Endothelial cell of umbilical vein (primary cell): ENCODE measurements at regions of chr4 and their contacts with region 1.

Region 1: DNA sequence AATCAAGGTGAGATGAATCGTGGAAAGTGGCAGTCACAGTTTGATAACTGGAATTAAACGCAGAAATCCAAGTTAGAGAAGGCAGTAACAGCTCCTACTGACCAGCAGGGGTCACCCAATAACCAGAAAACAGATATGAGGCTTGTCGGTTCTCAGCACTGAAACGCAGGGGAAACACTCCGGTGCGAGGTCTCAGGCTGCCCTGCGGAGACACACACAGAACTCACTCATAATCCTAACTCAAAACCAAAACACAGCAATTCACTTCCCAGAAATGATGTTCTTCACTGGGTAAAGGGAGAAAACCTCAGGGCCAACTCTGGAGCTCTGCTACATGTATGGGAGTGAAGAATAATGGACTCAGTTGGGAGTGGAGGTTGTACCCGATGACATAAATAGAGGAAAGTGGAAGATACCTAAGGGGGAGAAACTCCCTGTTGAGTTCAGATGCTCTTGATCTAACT is 384.4 kb downstream of the RAPGEF2 start:
- DNase-seq: peak; percentile 65
- H3K4me3 ChIP-seq: no peak overlapping the region
- H3K27ac ChIP-seq: no peak overlapping the region
- H3K4me1 ChIP-seq: no peaks in the 10 kb centered on the region
- H3K27me3 ChIP-seq: peaks cover 18 to 29% of the 10 kb centered on the region in 2 experiments
- CTCF ChIP-seq: peak; percentile 68 to 70
- POLR2A ChIP-seq: no peak

Region 2: DNA sequence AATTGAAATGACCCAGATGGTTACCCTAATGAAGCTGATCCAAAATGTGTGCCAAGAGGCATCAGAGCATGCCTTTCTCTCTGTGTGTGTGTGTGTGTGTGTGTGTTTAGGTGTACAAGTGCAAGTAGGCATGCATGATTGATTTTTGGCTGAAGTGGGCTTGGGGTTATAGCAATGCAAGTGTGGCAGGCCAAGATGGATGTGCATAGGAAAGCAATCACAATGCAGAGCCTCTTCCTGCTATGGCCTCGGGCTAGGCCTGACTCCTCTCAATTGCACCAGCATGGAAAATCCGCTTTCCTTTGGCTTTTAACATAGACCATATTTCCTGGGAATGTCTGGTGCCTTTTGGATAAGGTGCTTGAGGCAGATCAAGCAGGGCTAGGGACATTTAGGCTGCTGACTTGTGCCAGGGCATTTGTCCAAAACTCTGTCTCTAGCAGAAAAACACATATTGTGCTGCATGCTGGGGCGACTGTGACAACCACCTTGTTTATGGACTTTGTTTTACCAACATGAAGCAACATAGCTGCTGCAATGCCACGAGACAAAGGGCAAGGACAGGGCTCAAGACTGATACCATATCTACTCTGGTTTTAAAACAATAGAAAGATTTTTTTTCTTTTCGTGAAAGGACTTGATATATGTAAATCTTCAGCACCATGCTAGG is 11.3 kb after region 1 on chr4:
- CTCF ChIA-PET with region 1: interaction called, 26 read pairs
- POLR2A ChIA-PET with region 1: no interaction called
- dilution Hi-C with region 1: no loop called
- intact Hi-C with region 1: no loop called
- DNase-seq: no peak
- H3K4me3 ChIP-seq: no peak overlapping the region
- H3K27ac ChIP-seq: no peak overlapping the region
- H3K4me1 ChIP-seq: peaks cover 4% of the 10 kb centered on the region
- H3K27me3 ChIP-seq: peaks cover 14 to 29% of the 10 kb centered on the region in 2 experiments
- CTCF ChIP-seq: no peak
- POLR2A ChIP-seq: no peak

Region 3: DNA sequence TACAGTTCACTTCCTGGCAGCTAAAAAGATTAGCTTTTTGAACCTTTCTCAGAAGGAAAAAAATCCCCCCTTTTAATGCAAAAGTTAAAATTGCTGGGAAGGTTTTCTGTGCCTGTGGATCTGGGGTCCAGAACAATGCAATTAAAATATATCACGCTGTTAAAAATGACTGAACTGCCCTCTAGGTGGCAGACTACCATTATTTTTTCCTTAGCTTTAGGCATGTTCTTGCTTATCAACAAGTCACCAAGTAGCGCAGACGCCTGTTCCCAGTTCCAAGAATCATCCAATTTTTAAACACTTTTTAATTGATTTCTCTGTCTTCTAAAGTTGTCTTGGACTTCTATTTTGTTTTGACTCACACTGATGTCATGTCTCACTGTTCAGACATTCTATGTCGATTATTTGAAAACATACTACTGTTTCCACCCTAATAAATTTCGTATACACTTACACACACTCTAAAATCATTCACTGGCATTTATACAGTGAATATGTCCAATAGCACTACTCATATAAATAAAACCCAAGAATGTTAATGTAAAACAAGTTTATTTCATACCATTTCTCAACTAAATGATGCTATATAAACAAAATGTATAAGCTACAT is 277.1 kb after region 1 on chr4:
- CTCF ChIA-PET with region 1: interaction called, 14 read pairs
- POLR2A ChIA-PET with region 1: no interaction called
- dilution Hi-C with region 1: no loop called
- intact Hi-C with region 1: loop called (anchors 1 kb)
- DNase-seq: peak; percentile 68
- H3K4me3 ChIP-seq: no peak overlapping the region
- H3K27ac ChIP-seq: no peak overlapping the region
- H3K4me1 ChIP-seq: no peaks in the 10 kb centered on the region
- H3K27me3 ChIP-seq: no peaks in the 10 kb centered on the region
- CTCF ChIP-seq: peak; percentile 38 to 43
- POLR2A ChIP-seq: no peak

Region 4: DNA sequence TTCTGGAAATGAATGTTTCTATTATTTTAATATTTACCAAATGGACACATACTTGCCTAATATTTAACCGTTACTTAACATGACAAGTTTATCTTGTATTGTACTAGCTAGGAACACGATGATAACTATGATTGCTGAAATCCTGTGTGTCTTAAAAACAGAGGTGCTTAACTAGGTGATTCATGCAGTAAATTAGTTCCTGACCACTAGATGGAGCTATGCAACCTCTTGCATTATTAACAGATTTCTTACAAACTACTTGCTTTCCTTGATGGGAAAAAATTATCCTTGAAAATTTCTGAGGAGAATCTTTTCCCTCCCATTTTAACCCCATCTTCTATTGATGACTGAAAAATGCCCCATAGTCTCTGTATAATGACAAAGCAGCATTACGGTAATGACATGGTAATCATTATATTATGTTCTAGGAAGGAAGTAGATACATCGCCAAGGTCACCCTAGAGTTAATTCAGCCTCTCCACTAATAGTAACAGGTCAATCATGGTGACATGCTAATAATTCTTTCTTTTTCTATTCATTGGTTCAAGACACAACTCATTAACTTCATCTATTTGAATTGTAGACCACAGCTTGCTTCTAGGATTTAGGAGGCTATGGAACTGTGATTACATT is 459.8 kb after region 1 on chr4:
- CTCF ChIA-PET with region 1: interaction called, 16 read pairs
- POLR2A ChIA-PET with region 1: no interaction called
- dilution Hi-C with region 1: no loop called
- intact Hi-C with region 1: loop called (anchors 1 kb)
- DNase-seq: peak; percentile 46
- H3K4me3 ChIP-seq: no peak overlapping the region
- H3K27ac ChIP-seq: no peak overlapping the region
- H3K4me1 ChIP-seq: no peaks in the 10 kb centered on the region
- H3K27me3 ChIP-seq: no peaks in the 10 kb centered on the region
- CTCF ChIP-seq: peak; percentile 46 to 51
- POLR2A ChIP-seq: no peak